Tibial artery (tissue), 4 donors: ENCODE measurements at regions of chr21 and their contacts with region 1.

Region 1: DNA sequence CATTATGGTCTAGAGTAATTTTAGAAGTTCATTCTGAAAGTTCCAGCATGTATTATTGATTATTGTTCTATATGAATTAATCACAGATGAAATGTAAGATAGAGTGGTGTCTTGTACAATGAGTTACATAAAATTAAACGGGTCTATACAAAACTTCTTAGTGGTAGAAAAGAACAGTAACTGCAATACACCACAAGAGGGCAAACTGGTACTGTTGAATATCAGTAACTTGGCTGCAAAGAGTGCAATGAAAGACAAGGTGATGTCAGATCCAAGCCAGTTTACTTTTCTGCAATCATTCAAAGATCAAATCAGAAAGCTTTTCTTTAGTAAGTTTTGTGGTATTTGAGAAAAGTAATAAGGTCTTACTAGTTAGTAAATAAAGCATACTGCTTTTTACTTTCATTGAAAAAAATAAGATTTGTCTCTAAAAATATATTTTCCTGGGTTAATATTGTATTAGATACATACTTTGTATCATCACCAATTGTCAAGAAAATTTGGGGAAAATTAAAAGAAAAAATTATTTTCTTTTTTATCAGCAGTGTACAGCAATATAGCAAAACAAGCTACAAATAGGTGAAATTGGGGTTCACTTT is 66.4 kb upstream of the BTG3 start:
- DNase-seq: no peak
- H3K4me3 ChIP-seq: no peak overlapping the region
- H3K27ac ChIP-seq: no peak overlapping the region
- H3K4me1 ChIP-seq: no peaks in the 10 kb centered on the region
- H3K27me3 ChIP-seq: no peaks in the 10 kb centered on the region
- CTCF ChIP-seq: peak; percentile 80 to 90

Region 2: GRCh38 chr21:17925000-17925610 is 246.0 kb after region 1 on chr21:
- intact Hi-C with region 1: loop called (anchors 5 kb)
- DNase-seq: peak in 1 of 2 donors; percentile 34
- H3K4me3 ChIP-seq: no peak overlapping the region
- H3K27ac ChIP-seq: no peak overlapping the region
- H3K4me1 ChIP-seq: no peaks in the 10 kb centered on the region
- H3K27me3 ChIP-seq: no peaks in the 10 kb centered on the region
- CTCF ChIP-seq: peak; percentile 68 to 89